ENCODE measurements at regions of chr4 and their contacts with region 1.

Region 1: GRCh38 chr4:16026160-16026761 is 57.6 kb downstream of the PROM1 start:
- DNase-seq: peak in 1 of 2 donors; percentile 82
- H3K4me3 ChIP-seq: no peak overlapping the region
- H3K27ac ChIP-seq: no peak overlapping the region
- H3K4me1 ChIP-seq: peaks cover 0 to 21% (median 9%) of the 10 kb centered on the region in 4 donors
- H3K27me3 ChIP-seq: no peaks in the 10 kb centered on the region
- CTCF ChIP-seq: peak in 5 of 7 experiments; percentile 39 to 88 (median 78)
- EP300 ChIP-seq: no peak
- POLR2A ChIP-seq: no peak

Region 2: DNA sequence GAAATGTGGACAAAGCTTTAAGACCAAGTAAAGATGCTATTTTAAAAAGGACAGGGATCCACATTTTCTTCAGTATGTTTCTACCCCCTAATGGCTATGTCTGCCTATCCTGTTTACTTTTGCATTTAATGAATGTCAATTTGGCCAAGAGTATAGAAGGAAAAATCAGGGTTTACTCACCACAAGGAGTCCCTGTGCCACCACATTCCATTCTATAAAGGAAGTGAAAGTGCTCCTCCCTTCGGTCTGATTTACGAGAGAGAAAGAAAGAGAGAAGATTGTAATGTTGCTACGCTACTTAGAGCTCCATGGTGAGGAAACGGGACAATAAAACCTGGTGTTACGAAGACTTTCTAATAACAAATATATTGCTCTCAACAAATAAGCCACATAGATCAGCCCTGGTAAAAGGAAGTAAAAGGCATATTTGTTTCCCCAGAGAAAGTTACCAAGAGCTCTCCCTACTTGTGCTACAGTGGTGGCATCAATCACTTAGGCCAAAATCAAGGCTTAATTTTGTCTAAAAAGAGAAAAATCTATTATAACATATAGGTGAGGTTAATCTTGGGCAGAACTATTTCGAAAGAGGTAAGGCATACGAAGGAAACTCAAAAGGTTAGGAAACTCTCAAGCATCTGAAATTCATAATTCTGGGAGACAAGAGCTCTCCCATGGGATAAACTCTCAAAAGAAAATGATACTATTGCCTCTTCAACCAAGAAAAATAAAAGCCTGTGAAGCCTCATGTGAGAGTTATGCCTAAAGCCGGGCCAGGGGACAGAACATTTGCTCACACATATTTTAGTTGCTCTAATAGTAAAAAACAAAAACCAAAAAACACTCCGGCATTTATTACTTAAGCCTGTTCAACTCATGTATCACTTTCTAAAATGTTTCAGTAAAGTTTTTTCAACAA is 170.5 kb after region 1 on chr4:
- intact Hi-C with region 1: loop called (anchors 10 kb)
- DNase-seq: peak in 1 of 2 donors; percentile 82
- H3K4me3 ChIP-seq: peak overlapping the region in 3 of 4 donors; percentile 11 to 18 (median 15)
- H3K27ac ChIP-seq: peak overlapping the region in 4 of 5 donors; percentile 44 to 76 (median 66)
- H3K4me1 ChIP-seq: peaks cover 0 to 77% (median 44%) of the 10 kb centered on the region in 4 donors
- H3K27me3 ChIP-seq: no peaks in the 10 kb centered on the region
- CTCF ChIP-seq: peak in 5 of 7 experiments; percentile 8 to 60 (median 25)
- EP300 ChIP-seq: no peak
- POLR2A ChIP-seq: no peak

Region 3: DNA sequence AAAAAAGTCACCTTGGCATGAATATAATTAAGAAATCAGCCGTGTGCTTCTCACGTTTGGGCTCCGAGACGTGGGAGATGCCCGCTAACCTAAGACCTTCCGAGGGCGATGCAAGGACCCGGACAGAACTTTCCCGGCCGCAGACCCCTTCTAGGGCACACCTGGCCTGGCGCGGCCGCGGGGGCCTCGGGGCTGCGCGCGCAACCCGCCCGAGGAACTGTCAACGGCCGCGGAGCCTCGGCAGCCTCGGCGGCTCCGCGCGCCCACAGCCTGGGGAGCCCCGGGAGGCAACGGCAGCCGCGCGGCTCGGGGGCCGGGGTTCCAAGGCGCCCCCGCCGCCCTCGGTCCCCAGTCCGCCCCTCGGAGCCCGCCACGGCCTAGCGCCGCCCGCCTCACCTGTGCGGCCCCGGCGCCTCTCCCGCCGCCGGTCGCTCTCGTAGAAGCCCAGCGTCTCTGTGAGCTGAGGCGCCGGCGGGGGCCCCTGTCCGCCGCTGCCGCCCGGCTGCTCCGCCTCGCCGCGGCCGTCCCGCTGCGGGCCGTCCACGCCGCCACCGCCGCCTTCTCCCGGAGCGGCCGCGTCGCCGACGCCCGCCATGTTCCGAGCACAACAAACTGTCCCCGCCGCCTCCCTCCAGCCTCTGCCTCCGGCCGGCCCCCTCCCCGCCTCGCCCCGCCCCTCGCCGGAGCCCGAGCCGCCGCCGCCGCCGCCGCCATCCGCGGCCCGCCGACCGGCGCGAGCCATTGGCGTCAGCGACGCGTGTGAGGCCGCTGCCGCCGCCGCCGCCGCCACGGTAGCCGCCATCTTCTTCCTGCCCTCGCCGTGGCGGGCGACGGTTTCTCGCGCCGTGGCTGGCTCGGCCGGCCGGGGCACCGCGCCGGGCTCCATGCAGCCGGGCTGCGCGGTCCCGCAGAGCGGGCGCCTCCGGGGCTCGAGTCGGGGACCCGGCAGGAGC is 199.9 kb after region 1 on chr4 and contains the start of gene TAPT1:
- intact Hi-C with region 1: no loop called
- DNase-seq: peak; percentile 83 to 94
- H3K4me3 ChIP-seq: peak within 1 kb of the TSS; percentile 71 to 94 (median 84)
- H3K27ac ChIP-seq: peak within 1 kb of the TSS; percentile 93 to 99 (median 98)
- H3K4me1 ChIP-seq: peaks cover 22 to 66% (median 51%) of the 10 kb centered on the region in 4 donors
- H3K27me3 ChIP-seq: no peaks in the 10 kb centered on the region
- CTCF ChIP-seq: no peak
- EP300 ChIP-seq: no peak
- POLR2A ChIP-seq: no peak
- total RNA-seq, gene TAPT1: 12.8 to 97.8 (median 33.0) TPM

Region 4: GRCh38 chr4:16264798-16265197 is 238.5 kb after region 1 on chr4:
- intact Hi-C with region 1: loop called (anchors 5 kb)
- DNase-seq: peak in 1 of 2 donors; percentile 73
- H3K4me3 ChIP-seq: no peak overlapping the region
- H3K27ac ChIP-seq: no peak overlapping the region
- H3K4me1 ChIP-seq: peaks cover 0 to 14% (median 2%) of the 10 kb centered on the region in 4 donors
- H3K27me3 ChIP-seq: no peaks in the 10 kb centered on the region
- CTCF ChIP-seq: peak in 5 of 7 experiments; percentile 23 to 59 (median 33)
- EP300 ChIP-seq: no peak
- POLR2A ChIP-seq: no peak

Region 5: GRCh38 chr4:16337936-16338335 is 311.7 kb after region 1 on chr4:
- intact Hi-C with region 1: no loop called
- DNase-seq: no peak
- H3K4me3 ChIP-seq: no peak overlapping the region
- H3K27ac ChIP-seq: no peak overlapping the region
- H3K4me1 ChIP-seq: no peaks in the 10 kb centered on the region
- H3K27me3 ChIP-seq: no peaks in the 10 kb centered on the region
- CTCF ChIP-seq: no peak
- EP300 ChIP-seq: no peak
- POLR2A ChIP-seq: no peak

Region 6: GRCh38 chr4:16418814-16419213 is 392.6 kb after region 1 on chr4:
- intact Hi-C with region 1: no loop called
- DNase-seq: peak in 1 of 2 donors; percentile 22
- H3K4me3 ChIP-seq: no peak overlapping the region
- H3K27ac ChIP-seq: no peak overlapping the region
- H3K4me1 ChIP-seq: no peaks in the 10 kb centered on the region
- H3K27me3 ChIP-seq: no peaks in the 10 kb centered on the region
- CTCF ChIP-seq: no peak
- EP300 ChIP-seq: no peak
- POLR2A ChIP-seq: no peak

Measured in stomach (tissue), 19 donors.